ENCODE measurements at regions of chr10 and their contacts with region 1.

Region 1: GRCh38 chr10:73167783-73168464 is at the starts of genes ECD and FAM149B1:
- DNase-seq: peak; percentile 86 to 93 (median 92)
- ATAC-seq: peak; percentile 97
- H3K4me3 ChIP-seq: peak within 1 kb of the TSS; percentile 97
- H3K4me3 Mint-ChIP-seq: peak within 1 kb of the TSS; percentile 92 to 100 (median 100)
- H3K27ac ChIP-seq: peak within 1 kb of the TSS; percentile 95
- H3K27ac Mint-ChIP-seq: peak within 1 kb of the TSS; percentile 98 to 100 (median 99)
- H3K4me1 ChIP-seq: peaks cover 29 to 33% of the 10 kb centered on the region in 2 donors
- H3K4me1 Mint-ChIP-seq: peaks cover 30 to 56% (median 43%) of the 10 kb centered on the region in 7 donors
- H3K27me3 ChIP-seq: no peaks in the 10 kb centered on the region
- H3K27me3 Mint-ChIP-seq: no peaks in the 10 kb centered on the region
- total RNA-seq, gene ECD: 30.2 to 42.7 (median 33.1) TPM
- total RNA-seq, gene FAM149B1: 13.7 to 21.0 (median 16.3) TPM

Region 2: DNA sequence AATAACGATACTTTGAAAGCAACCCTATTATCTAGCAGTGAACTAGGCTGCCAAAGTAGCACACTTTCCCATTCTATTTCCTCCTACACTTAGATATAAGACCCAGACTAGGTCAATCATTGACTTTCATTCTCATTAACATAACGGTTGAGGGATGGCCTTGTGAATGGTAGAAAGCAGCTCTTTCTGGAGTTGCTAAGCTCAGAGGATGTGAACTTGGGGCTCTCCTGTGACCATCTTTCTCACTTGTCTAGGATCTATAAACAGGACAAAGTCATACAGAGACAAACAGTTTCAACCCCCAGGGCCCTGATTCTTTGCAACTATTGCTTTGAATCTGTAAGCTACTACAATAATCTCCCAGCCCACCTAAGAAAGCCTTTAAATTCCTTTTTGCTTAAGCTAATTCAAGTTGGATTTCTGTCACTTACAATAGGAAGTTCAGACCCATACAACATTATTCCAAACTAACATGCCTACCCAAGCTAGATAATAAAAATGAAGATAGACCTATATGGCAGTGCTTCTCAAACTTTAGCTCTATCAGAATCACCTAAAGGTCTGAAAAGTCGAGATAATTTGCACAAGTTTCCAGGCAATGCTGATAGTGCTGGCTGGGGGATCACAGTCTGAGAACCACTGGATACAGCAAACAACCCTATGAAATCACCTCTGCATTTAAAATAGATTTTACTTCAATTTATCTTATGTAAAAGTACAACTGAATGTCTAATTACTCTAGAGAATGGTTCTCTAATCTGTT is 88.0 kb before region 1 on chr10:
- CTCF ChIA-PET with region 1: no interaction called
- POLR2A ChIA-PET with region 1: no interaction called
- intact Hi-C with region 1: no loop called
- DNase-seq: no peak
- ATAC-seq: no peak
- H3K4me3 ChIP-seq: no peak overlapping the region
- H3K4me3 Mint-ChIP-seq: no peak overlapping the region
- H3K27ac ChIP-seq: no peak overlapping the region
- H3K27ac Mint-ChIP-seq: peak overlapping the region in 1 of 9 donors; percentile 53
- H3K4me1 ChIP-seq: no peaks in the 10 kb centered on the region
- H3K4me1 Mint-ChIP-seq: peaks cover 5 to 42% (median 15%) of the 10 kb centered on the region in 7 donors
- H3K27me3 ChIP-seq: no peaks in the 10 kb centered on the region
- H3K27me3 Mint-ChIP-seq: no peaks in the 10 kb centered on the region

Region 3: GRCh38 chr10:73110345-73110849 is 57.5 kb before region 1 on chr10 and contains the start of gene NUDT13:
- CTCF ChIA-PET with region 1: interaction called, 6 read pairs
- POLR2A ChIA-PET with region 1: no interaction called
- intact Hi-C with region 1: loop called in 1 of 2 experiments (anchors 1 kb)
- DNase-seq: peak in 8 of 9 donors; percentile 30 to 59 (median 47)
- ATAC-seq: peak; percentile 96
- H3K4me3 ChIP-seq: peak within 1 kb of the TSS; percentile 55
- H3K4me3 Mint-ChIP-seq: peak within 1 kb of the TSS; percentile 76 to 96 (median 94)
- H3K27ac ChIP-seq: peak within 1 kb of the TSS; percentile 71
- H3K27ac Mint-ChIP-seq: peak within 1 kb of the TSS; percentile 78 to 95 (median 90)
- H3K4me1 ChIP-seq: no peaks in the 10 kb centered on the region
- H3K4me1 Mint-ChIP-seq: peaks cover 3 to 17% (median 14%) of the 10 kb centered on the region in 7 donors
- H3K27me3 ChIP-seq: no peaks in the 10 kb centered on the region
- H3K27me3 Mint-ChIP-seq: no peaks in the 10 kb centered on the region
- total RNA-seq, gene NUDT13: 1.2 to 3.5 (median 1.5) TPM

Region 4: GRCh38 chr10:73209705-73210104 is 41.8 kb after region 1 on chr10:
- CTCF ChIA-PET with region 1: no interaction called
- POLR2A ChIA-PET with region 1: no interaction called
- intact Hi-C with region 1: no loop called
- DNase-seq: no peak
- ATAC-seq: no peak
- H3K4me3 ChIP-seq: no peak overlapping the region
- H3K4me3 Mint-ChIP-seq: no peak overlapping the region
- H3K27ac ChIP-seq: no peak overlapping the region
- H3K27ac Mint-ChIP-seq: peak overlapping the region in 1 of 9 donors; percentile 18
- H3K4me1 ChIP-seq: no peaks in the 10 kb centered on the region
- H3K4me1 Mint-ChIP-seq: peaks cover 0 to 2% (median 0%) of the 10 kb centered on the region in 7 donors
- H3K27me3 ChIP-seq: no peaks in the 10 kb centered on the region
- H3K27me3 Mint-ChIP-seq: no peaks in the 10 kb centered on the region

Region 5: GRCh38 chr10:73246783-73247508 is 79.0 kb after region 1 on chr10 and contains the start of gene DNAJC9:
- CTCF ChIA-PET with region 1: interaction called, 3 read pairs
- POLR2A ChIA-PET with region 1: interaction called, 4 read pairs
- intact Hi-C with region 1: loop called (anchors 1 kb)
- DNase-seq: peak; percentile 93 to 98 (median 96)
- ATAC-seq: peak; percentile 95
- H3K4me3 ChIP-seq: peak within 1 kb of the TSS; percentile 71
- H3K4me3 Mint-ChIP-seq: peak within 1 kb of the TSS; percentile 92 to 100 (median 97)
- H3K27ac ChIP-seq: peak within 1 kb of the TSS; percentile 86
- H3K27ac Mint-ChIP-seq: peak within 1 kb of the TSS; percentile 91 to 98 (median 96)
- H3K4me1 ChIP-seq: peaks cover 27 to 37% of the 10 kb centered on the region in 2 donors
- H3K4me1 Mint-ChIP-seq: peaks cover 30 to 69% (median 55%) of the 10 kb centered on the region in 7 donors
- H3K27me3 ChIP-seq: no peaks in the 10 kb centered on the region
- H3K27me3 Mint-ChIP-seq: no peaks in the 10 kb centered on the region
- total RNA-seq, gene DNAJC9: 14.5 to 47.7 (median 26.8) TPM

Region 6: DNA sequence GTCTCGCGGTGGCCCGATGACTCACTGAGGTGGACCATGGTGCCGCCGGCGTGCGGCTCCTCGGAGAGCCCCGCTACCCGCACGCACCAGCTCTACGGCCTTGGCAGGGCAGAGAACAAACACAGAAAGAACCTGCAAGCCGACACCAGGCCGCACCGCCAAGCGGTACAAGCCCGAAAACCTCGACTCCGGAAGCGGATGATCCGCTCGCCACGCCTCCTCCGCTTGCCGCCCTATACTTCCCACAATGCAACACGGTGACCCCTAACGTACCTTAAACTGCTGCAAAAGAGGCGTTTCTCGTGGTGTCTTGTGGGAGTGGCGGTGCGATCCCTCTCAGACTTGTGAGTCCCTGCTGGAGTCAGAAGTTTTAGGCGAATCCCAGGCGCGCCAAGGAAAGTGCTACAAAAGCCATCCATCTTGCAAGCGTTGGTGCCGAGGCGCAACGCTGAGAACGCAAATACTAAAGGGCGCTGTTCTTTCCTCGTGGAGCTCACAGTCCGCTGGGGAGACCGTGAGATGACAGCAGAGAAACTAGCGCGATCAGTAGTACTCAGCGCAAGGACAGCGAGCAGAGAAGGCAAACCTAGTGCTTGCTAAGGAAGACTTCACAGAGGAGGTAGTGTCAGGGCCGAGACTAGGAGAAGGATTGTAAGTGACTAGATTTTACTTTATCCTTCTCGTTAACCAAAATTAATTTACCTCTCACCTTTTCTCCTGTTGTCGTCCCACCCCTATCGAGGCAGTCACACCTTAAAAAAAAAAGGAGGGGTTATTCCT is 84.7 kb after region 1 on chr10 and contains the start of gene MRPS16:
- CTCF ChIA-PET with region 1: interaction called, 3 read pairs
- POLR2A ChIA-PET with region 1: interaction called, 4 read pairs
- intact Hi-C with region 1: loop called (anchors 1 kb)
- DNase-seq: peak; percentile 75 to 95 (median 93)
- ATAC-seq: peak; percentile 98
- H3K4me3 ChIP-seq: peak within 1 kb of the TSS; percentile 94
- H3K4me3 Mint-ChIP-seq: peak within 1 kb of the TSS; percentile 95 to 100 (median 99)
- H3K27ac ChIP-seq: peak within 1 kb of the TSS; percentile 92
- H3K27ac Mint-ChIP-seq: peak within 1 kb of the TSS; percentile 91 to 97 (median 94)
- H3K4me1 ChIP-seq: peaks cover 18 to 26% of the 10 kb centered on the region in 2 donors
- H3K4me1 Mint-ChIP-seq: peaks cover 19 to 50% (median 37%) of the 10 kb centered on the region in 7 donors
- H3K27me3 ChIP-seq: no peaks in the 10 kb centered on the region
- H3K27me3 Mint-ChIP-seq: peaks cover 0 to 2% (median 0%) of the 10 kb centered on the region in 5 donors
- total RNA-seq, gene MRPS16: 29.6 to 99.9 (median 47.6) TPM

Region 7: DNA sequence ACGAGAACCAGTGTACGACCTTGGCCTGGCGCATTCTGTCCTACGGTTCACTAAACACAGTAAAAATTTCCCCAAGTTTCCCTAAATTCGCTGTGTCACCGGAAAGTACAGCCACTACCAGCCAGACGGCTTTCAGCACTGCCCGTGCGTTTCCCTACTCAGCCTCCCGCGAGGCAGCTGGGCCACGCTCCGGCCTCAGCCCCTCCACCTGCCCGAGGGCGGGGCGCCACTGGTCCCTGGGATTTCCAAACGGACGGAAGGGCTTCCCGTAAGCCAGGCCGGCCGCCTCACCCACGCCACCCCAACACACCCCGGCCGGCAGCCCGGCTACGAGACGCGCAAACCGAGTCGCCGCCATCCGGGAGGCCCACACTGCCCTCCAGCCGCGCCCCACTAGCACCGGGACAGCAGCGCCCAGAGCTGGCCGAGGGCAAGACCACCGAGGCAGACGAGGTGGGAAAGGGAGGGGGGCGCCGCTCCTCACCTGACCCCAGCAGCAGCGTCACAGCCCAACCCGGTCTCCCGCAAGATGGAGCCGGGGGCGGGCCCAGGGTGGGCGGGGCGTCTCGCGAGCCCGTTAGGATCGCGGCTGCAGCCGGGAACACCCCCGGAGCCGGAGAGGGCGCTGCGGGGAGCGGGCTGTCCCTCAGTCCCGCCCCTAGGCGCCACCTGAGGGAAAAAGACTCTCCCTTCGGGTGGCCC is 245.8 kb after region 1 on chr10 and contains the start of gene ANXA7:
- CTCF ChIA-PET with region 1: no interaction called
- POLR2A ChIA-PET with region 1: no interaction called
- intact Hi-C with region 1: loop called in 1 of 2 experiments (anchors 1 kb)
- DNase-seq: peak; percentile 78 to 93 (median 85)
- ATAC-seq: peak; percentile 99
- H3K4me3 ChIP-seq: peak within 1 kb of the TSS; percentile 78
- H3K4me3 Mint-ChIP-seq: peak within 1 kb of the TSS; percentile 82 to 97 (median 94)
- H3K27ac ChIP-seq: peak within 1 kb of the TSS; percentile 98
- H3K27ac Mint-ChIP-seq: peak within 1 kb of the TSS; percentile 83 to 95 (median 90)
- H3K4me1 ChIP-seq: peaks cover 8 to 16% of the 10 kb centered on the region in 2 donors
- H3K4me1 Mint-ChIP-seq: peaks cover 39 to 60% (median 53%) of the 10 kb centered on the region in 7 donors
- H3K27me3 ChIP-seq: no peaks in the 10 kb centered on the region
- H3K27me3 Mint-ChIP-seq: peaks cover 0 to 4% (median 0%) of the 10 kb centered on the region in 5 donors
- total RNA-seq, gene ANXA7: 74.8 to 118 (median 97.3) TPM